Mammary epithelial cell (primary cell): ENCODE measurements at regions of chr2 and their contacts with region 1.

Region 1: DNA sequence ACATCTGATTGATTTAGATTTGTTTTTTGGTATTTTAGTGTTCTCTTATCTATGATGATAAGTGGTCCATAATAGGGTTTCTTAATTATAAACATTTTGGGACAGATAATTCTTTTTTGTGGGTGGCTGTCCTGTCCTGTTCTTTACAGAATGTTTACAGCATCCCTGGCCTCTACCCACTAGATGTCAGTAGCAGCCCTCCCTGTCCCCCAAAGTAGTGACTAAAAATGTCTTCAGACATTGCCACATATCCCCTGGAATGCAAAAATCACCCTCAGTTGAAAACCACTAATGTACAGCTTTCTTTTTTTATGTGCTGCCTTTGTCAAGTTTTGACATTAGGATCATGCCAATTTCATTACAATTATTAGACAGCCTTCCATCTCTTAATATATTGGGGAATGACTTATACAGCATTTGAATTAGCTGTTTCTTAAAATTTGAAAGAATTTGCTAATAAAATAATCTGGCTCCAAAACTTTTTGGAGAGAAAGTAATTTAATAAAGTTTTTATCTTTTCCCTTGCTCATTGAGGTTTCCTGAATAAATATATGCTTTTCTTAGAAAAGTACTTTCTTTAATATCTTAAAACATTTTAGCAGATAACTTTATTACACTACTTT is 19.5 kb downstream of the WIPF1 start:
- DNase-seq: peak; percentile 41
- H3K4me3 ChIP-seq: no peak overlapping the region
- H3K27ac ChIP-seq: no peak overlapping the region
- H3K4me1 ChIP-seq: peaks cover 3% of the 10 kb centered on the region
- H3K27me3 ChIP-seq: no peaks in the 10 kb centered on the region
- CTCF ChIP-seq: peak; percentile 30 to 54

Region 2: GRCh38 chr2:174603280-174603679 is 25.2 kb after region 1 on chr2:
- CTCF ChIA-PET with region 1: no interaction called
- dilution Hi-C with region 1: no loop called
- in situ Hi-C with region 1: no loop called
- intact Hi-C with region 1: loop called (anchors 1 kb)
- DNase-seq: peak; percentile 60
- H3K4me3 ChIP-seq: no peak overlapping the region
- H3K27ac ChIP-seq: no peak overlapping the region
- H3K4me1 ChIP-seq: no peaks in the 10 kb centered on the region
- H3K27me3 ChIP-seq: no peaks in the 10 kb centered on the region
- CTCF ChIP-seq: peak; percentile 37 to 61

Region 3: GRCh38 chr2:174673876-174674275 is 95.8 kb after region 1 on chr2:
- CTCF ChIA-PET with region 1: no interaction called
- dilution Hi-C with region 1: no loop called
- in situ Hi-C with region 1: no loop called
- intact Hi-C with region 1: no loop called
- DNase-seq: no peak
- H3K4me3 ChIP-seq: no peak overlapping the region
- H3K27ac ChIP-seq: no peak overlapping the region
- H3K4me1 ChIP-seq: no peaks in the 10 kb centered on the region
- H3K27me3 ChIP-seq: peaks cover 3% of the 10 kb centered on the region
- CTCF ChIP-seq: no peak

Region 4: GRCh38 chr2:174688079-174688478 is 110.0 kb after region 1 on chr2:
- CTCF ChIA-PET with region 1: interaction called, 3 read pairs
- dilution Hi-C with region 1: no loop called
- in situ Hi-C with region 1: no loop called
- intact Hi-C with region 1: loop called (anchors 2 kb)
- DNase-seq: peak; percentile 16
- H3K4me3 ChIP-seq: no peak overlapping the region
- H3K27ac ChIP-seq: no peak overlapping the region
- H3K4me1 ChIP-seq: no peaks in the 10 kb centered on the region
- H3K27me3 ChIP-seq: peaks cover 10% of the 10 kb centered on the region
- CTCF ChIP-seq: peak; percentile 38 to 42

Region 5: GRCh38 chr2:174729797-174730697 is 152.0 kb after region 1 on chr2:
- CTCF ChIA-PET with region 1: no interaction called
- dilution Hi-C with region 1: no loop called
- in situ Hi-C with region 1: no loop called
- intact Hi-C with region 1: no loop called
- DNase-seq: no peak
- H3K4me3 ChIP-seq: peak overlapping the region in 2 of 3 experiments; percentile 33 to 42
- H3K27ac ChIP-seq: no peak overlapping the region
- H3K4me1 ChIP-seq: peaks cover 9% of the 10 kb centered on the region
- H3K27me3 ChIP-seq: peaks cover 23% of the 10 kb centered on the region
- CTCF ChIP-seq: no peak